Activated CD8-positive, alpha-beta T cell treated with anti-CD3 and anti-CD28 coated beads for 36 hours (primary cell): ENCODE measurements at regions of chr6 and their contacts with region 1.

Region 1: DNA sequence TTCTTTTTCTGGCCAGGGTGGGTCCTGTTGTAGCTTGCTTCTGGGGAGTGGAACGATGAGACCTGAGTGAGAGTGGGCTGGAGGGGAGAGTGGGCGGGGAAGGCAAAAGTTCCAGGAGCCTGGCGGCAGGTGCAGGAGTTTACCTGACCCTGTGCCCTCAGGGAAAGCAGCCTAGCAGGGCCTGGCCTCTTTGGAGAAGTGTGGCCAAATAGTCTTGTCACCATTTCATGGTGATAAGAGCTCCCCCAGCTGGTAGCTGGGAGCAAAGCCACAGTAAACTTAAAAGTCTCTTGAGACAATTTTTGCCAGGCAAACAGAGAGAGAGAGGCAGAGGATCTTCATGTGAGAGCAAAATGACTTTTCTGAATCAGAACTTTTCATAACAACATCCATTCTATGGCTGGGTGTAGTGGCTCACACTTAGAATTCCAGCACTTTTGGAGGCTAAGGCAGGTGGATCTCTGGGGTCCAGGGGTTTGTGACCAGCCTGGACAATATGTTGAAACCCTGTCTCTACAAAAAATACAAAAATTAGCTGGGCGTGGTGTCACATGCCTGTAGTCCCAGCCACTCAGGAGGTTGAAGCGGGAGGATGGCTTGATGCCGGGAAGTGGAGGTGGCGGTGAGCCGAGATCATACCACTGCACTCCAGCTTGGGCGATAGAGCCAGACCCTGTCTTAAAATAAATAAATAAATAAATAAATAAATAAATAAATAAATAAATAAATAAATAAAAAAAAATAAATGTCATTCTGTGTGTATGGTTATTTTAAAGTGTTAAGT is 161.8 kb upstream of the SCGN start:
- DNase-seq: peak; percentile 81
- ATAC-seq: peak; percentile 96
- H3K4me3 Mint-ChIP-seq: no peak overlapping the region
- H3K27ac Mint-ChIP-seq: no peak overlapping the region
- H3K4me1 Mint-ChIP-seq: peaks cover 7% of the 10 kb centered on the region
- H3K27me3 Mint-ChIP-seq: no peaks in the 10 kb centered on the region
- CTCF ChIP-seq: peak; percentile 86

Region 2: DNA sequence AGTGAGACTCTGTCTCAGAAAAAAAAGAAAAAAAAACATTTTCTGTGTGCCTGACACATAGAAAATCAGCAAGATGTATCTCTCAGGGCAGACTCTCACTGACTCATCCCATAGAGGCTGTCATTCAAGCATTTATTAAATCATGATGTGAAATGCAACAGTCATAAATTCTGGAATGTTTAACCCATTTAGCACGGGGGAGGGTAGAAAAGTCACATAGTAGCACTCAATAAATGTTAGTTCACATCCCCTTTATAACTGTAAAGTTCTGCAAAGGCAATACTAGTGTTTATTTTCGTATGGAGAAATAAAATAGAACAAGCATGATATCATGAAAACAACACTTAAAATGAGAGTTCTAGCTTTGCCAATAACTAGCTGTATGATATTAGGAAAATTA is 226.6 kb before region 1 on chr6:
- CTCF ChIA-PET with region 1: interaction called, 123 read pairs
- POLR2A ChIA-PET with region 1: interaction called, 5 read pairs
- intact Hi-C with region 1: loop called (anchors 1 kb)
- DNase-seq: no peak
- ATAC-seq: no peak
- H3K4me3 Mint-ChIP-seq: no peak overlapping the region
- H3K27ac Mint-ChIP-seq: no peak overlapping the region
- H3K4me1 Mint-ChIP-seq: peaks cover 2% of the 10 kb centered on the region
- H3K27me3 Mint-ChIP-seq: peaks cover 1% of the 10 kb centered on the region
- CTCF ChIP-seq: no peak

Region 3: DNA sequence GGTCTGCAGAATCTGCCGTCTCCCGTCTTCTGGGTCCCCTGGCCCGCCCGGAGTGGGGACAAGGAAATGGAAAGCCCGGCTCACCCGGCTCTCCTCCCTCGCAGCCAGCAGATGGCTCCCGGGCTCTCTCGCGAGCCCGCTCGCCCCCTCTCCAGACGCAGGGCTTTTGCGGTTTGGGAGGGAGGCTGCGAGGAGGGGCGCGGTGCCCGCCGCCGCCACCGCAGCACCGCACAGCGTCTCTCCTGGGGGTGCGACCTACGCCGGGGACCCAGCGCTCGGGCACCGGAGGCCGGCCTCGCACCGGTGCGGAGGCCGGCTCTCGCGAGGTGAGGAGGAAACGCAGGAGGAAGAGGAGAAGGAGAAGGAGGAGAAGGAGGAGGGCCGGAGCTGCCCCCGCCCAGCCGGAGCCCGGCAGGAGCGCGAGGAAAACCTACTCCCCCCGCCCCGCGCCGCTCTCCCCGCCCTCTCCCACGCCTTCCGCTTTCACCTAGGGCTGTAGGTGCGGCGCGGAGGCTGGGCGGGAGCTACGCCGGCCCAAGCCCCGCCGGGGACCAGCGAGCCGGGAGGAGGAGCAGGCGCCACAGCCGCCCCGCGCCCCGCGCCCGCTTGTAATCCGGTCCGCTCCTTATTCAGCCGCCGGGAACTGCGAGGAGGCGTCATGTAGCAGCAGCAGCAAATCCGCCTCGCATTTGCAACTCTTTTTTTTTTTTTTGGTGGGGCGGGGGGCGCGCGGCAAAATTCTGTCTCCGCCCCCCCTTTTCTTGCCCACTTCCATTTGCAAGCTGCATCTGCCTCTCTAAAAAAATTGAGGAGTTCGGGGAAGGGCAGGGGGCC is 211.1 kb before region 1 on chr6 and contains the start of gene CARMIL1:
- CTCF ChIA-PET with region 1: interaction called, 93 read pairs
- POLR2A ChIA-PET with region 1: interaction called, 4 read pairs
- intact Hi-C with region 1: no loop called
- DNase-seq: peak; percentile 81
- ATAC-seq: peak; percentile 79
- H3K4me3 Mint-ChIP-seq: peak within 1 kb of the TSS; percentile 81
- H3K27ac Mint-ChIP-seq: peak within 1 kb of the TSS; percentile 66
- H3K4me1 Mint-ChIP-seq: peaks cover 36% of the 10 kb centered on the region
- H3K27me3 Mint-ChIP-seq: no peaks in the 10 kb centered on the region
- CTCF ChIP-seq: peak; percentile 75
- total RNA-seq, gene CARMIL1: 3.6 to 4.1 TPM

Region 4: GRCh38 chr6:25369433-25370181 is 120.6 kb before region 1 on chr6:
- CTCF ChIA-PET with region 1: interaction called, 13 read pairs
- POLR2A ChIA-PET with region 1: no interaction called
- intact Hi-C with region 1: no loop called
- DNase-seq: peak; percentile 51
- ATAC-seq: no peak
- H3K4me3 Mint-ChIP-seq: peak overlapping the region; percentile 58
- H3K27ac Mint-ChIP-seq: peak overlapping the region; percentile 92
- H3K4me1 Mint-ChIP-seq: peaks cover 79% of the 10 kb centered on the region
- H3K27me3 Mint-ChIP-seq: no peaks in the 10 kb centered on the region
- CTCF ChIP-seq: no peak

Region 5: DNA sequence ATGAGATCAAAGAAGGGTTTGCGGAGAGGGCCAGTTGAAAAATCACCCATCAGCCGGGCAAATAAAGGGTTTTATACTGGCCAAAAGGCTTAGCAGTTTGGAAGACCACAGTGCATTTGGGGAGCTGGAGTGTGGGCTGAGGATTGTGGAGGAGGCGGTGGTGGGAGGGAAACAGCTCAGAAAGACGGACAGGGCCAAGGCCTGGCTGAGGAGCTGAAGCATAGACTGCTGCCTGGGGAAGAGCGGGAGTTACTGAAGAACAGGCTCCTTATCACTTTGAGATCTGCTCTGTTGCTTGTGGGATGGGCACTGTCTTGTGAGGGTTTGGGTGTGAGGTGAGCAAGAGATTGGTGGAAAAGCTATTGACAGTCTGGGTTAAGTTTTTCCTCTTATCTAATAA is 66.8 kb before region 1 on chr6:
- CTCF ChIA-PET with region 1: no interaction called
- POLR2A ChIA-PET with region 1: no interaction called
- intact Hi-C with region 1: no loop called
- DNase-seq: no peak
- ATAC-seq: no peak
- H3K4me3 Mint-ChIP-seq: no peak overlapping the region
- H3K27ac Mint-ChIP-seq: no peak overlapping the region
- H3K4me1 Mint-ChIP-seq: no peaks in the 10 kb centered on the region
- H3K27me3 Mint-ChIP-seq: no peaks in the 10 kb centered on the region
- CTCF ChIP-seq: no peak

Region 6: DNA sequence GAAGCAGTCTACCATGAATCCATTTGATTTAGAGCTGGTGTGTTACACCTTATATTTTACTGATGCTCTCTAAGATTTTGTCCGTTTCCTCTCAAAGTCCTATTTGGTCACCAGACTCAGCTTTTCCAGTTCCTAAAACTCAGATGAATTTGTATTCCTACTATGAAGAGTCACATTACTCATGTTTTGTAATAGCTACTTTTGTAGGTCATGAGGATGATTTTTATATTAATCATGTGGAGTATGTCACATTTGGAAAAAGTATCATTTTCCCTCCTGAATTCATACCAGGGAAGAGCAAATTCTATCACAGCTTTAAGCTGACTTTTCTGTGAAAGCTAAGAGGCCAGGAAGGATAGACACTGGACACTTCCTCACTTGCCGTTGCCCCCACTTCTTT is 21.2 kb after region 1 on chr6:
- CTCF ChIA-PET with region 1: interaction called, 30 read pairs
- POLR2A ChIA-PET with region 1: interaction called, 3 read pairs
- intact Hi-C with region 1: no loop called
- DNase-seq: no peak
- ATAC-seq: no peak
- H3K4me3 Mint-ChIP-seq: no peak overlapping the region
- H3K27ac Mint-ChIP-seq: no peak overlapping the region
- H3K4me1 Mint-ChIP-seq: no peaks in the 10 kb centered on the region
- H3K27me3 Mint-ChIP-seq: no peaks in the 10 kb centered on the region
- CTCF ChIP-seq: no peak